Esophagus muscularis mucosa (tissue), 4 donors: ENCODE measurements at regions of chr1 and their contacts with region 1.

Region 1: DNA sequence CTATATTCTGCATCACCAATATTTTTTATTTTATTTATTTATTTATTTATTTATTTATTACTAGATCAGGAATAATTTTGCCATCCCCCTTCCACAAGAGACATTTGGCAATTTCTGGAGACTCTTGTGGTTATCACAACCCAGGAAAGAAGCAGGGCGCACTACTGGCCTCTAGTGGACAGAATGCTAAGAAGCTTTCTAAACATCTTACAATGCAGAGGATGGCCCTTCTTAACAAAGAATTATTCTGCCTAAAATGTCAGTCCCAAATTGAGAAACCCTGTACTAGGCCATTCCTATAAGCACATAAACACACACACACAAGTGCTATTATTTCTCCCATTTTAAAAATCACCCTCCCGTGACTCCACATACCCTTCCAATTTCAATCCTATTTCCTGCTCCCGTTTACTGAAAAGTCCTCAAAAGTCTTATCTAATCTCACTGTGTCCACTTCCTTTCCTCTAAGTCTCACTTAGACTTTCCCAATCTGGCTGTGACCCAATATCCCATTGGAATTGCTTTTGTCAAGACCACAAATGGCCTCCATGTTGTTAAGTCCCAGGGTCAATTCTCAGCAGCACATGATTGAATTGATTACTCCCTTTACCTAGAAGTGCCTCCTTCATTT is 43.7 kb upstream of the RNF11 start:
- DNase-seq: no peak
- H3K4me3 ChIP-seq: no peak overlapping the region
- H3K27ac ChIP-seq: no peak overlapping the region
- H3K4me1 ChIP-seq: no peaks in the 10 kb centered on the region
- H3K27me3 ChIP-seq: no peaks in the 10 kb centered on the region
- CTCF ChIP-seq: peak; percentile 61 to 86 (median 75)
- EP300 ChIP-seq: no peak
- POLR2A ChIP-seq: no peak

Region 2: GRCh38 chr1:50774759-50775351 is 417.5 kb before region 1 on chr1:
- intact Hi-C with region 1: loop called (anchors 2 kb)
- DNase-seq: no peak
- H3K4me3 ChIP-seq: no peak overlapping the region
- H3K27ac ChIP-seq: no peak overlapping the region
- H3K4me1 ChIP-seq: no peaks in the 10 kb centered on the region
- H3K27me3 ChIP-seq: no peaks in the 10 kb centered on the region
- CTCF ChIP-seq: peak; percentile 68 to 74 (median 70)
- EP300 ChIP-seq: no peak
- POLR2A ChIP-seq: no peak

Region 3: GRCh38 chr1:50929376-50929958 is 262.9 kb before region 1 on chr1:
- intact Hi-C with region 1: loop called (anchors 10 kb)
- DNase-seq: no peak
- H3K4me3 ChIP-seq: no peak overlapping the region
- H3K27ac ChIP-seq: no peak overlapping the region
- H3K4me1 ChIP-seq: peaks cover 0 to 8% (median 5%) of the 10 kb centered on the region in 4 donors
- H3K27me3 ChIP-seq: no peaks in the 10 kb centered on the region
- CTCF ChIP-seq: peak; percentile 57 to 67 (median 59)
- EP300 ChIP-seq: no peak
- POLR2A ChIP-seq: no peak

Region 4: DNA sequence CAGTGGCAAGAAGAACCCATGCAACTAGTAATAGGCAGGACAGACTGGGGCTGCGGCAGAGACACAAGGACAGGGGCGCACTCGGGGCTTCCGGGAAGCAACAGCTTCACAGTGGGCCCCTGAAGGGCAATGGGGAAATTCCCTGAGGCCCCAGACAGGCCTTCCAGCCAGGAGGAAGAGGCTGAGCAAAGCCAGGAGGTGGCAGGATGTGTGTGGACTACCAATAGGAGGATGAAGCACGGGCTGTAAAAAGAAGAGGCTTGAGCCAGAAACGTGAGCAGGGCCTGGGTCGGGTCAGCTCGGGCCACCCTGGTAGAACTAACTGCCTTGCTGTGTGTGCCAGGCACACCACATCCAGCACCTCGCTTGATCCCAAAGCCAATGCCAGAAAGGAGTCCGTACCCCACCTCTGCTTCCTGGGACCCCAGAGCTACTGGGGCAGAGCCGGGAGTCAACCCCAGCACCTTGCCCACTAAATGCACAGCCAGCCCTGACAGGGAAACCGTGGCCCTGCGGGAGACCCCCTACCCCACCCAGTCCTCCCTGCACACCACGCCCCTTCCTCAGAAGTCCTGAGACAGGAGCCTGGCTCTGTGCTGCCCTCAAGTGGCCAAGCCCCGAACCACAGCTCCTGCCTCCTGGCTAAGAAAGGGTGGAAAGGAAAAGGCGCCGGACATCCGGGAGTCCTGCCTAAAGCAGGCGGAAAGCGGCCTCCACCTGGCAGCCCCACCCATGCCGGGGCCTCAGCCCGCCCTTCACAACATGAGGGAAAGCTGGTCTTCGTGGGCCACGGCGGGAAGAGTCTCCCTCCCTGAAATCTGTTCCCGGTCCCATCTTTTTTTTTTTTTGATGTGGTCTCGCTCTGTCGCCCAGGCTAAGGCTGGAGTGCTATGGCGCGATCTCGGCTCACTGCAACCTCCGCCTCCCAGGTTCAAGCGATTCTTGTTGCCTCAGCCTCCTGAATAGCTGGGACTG is 104.3 kb after region 1 on chr1:
- intact Hi-C with region 1: loop called (anchors 2 kb)
- DNase-seq: no peak
- H3K4me3 ChIP-seq: peak overlapping the region; percentile 51 to 61 (median 56)
- H3K27ac ChIP-seq: no peak overlapping the region
- H3K4me1 ChIP-seq: peaks cover 12 to 17% (median 14%) of the 10 kb centered on the region in 4 donors
- H3K27me3 ChIP-seq: peaks cover 0 to 12% (median 0%) of the 10 kb centered on the region in 4 donors
- CTCF ChIP-seq: peak; percentile 88 to 99 (median 88)
- EP300 ChIP-seq: no peak
- POLR2A ChIP-seq: no peak